HCT116 (cell line): ENCODE measurements at regions of chr11 and their contacts with region 1.

Region 1: GRCh38 chr11:34263440-34264172 is 94.2 kb downstream of the ABTB2 start:
- DNase-seq: peak; percentile 99
- ATAC-seq: peak; percentile 96
- H3K4me3 ChIP-seq: peak overlapping the region in 1 of 2 experiments; percentile 41; a peak in 3 of 4 replicates
- H3K27ac ChIP-seq: peak overlapping the region; percentile 90
- H3K4me1 ChIP-seq: peaks cover 37 to 44% of the 10 kb centered on the region in 2 experiments
- H3K27me3 ChIP-seq: no peaks in the 10 kb centered on the region
- CTCF ChIP-seq: no peak
- POLR2A ChIP-seq: no peak
- RAD21 ChIP-seq: peak; percentile 63

Region 2: DNA sequence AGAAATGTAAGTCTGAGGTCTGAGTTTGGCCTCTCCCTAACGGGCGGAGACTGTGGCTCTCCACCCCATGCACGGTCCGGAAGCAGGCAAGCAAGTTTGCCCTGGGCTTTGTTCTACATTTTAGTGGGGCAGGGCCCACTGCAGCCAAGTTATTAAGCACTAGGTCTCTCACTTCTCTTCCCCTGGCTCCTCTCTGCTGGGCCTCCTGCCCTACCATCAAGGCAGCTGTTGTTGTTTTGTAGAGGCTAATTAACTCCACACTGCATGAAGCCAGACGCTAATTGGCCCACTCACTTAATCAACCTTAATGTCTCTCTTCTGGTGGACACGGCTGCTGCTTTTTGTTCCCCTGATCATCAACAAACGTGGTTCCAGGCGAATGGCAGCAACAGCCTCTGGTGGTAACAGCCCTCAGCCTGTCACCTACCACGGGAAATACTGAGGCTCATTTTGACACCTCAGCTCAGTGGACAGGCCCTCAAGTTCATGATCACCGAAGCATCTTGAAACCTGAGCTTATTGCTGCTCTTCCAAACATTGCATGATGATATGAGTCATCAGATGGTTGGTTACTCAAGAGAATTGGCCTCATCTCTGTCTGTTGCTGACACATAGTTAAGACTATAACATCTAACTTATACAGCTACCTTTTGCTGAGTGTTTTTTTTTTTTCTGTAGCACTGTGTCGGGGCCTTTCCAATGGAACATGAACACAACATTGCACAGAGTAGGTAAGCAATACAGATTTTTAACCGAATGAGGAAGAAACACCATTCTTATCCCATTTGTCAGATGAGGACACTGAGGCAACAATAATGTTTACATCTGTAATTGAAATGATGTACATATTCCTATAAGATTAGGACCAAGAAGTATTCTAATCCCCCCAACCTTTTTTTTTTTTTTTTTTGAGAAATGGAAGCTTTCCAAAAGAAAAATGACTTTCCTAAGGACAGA is 350.9 kb before region 1 on chr11:
- CTCF ChIA-PET with region 1: no interaction called
- POLR2A ChIA-PET with region 1: no interaction called
- RAD21 ChIA-PET with region 1: no interaction called
- intact Hi-C with region 1: no loop called
- DNase-seq: peak; percentile 10
- ATAC-seq: peak; percentile 52
- H3K4me3 ChIP-seq: no peak overlapping the region
- H3K27ac ChIP-seq: no peak overlapping the region
- H3K4me1 ChIP-seq: peaks cover 5 to 10% of the 10 kb centered on the region in 2 experiments; a peak in 3 of 4 replicates
- H3K27me3 ChIP-seq: no peaks in the 10 kb centered on the region
- CTCF ChIP-seq: no peak
- POLR2A ChIP-seq: no peak
- RAD21 ChIP-seq: no peak

Region 3: DNA sequence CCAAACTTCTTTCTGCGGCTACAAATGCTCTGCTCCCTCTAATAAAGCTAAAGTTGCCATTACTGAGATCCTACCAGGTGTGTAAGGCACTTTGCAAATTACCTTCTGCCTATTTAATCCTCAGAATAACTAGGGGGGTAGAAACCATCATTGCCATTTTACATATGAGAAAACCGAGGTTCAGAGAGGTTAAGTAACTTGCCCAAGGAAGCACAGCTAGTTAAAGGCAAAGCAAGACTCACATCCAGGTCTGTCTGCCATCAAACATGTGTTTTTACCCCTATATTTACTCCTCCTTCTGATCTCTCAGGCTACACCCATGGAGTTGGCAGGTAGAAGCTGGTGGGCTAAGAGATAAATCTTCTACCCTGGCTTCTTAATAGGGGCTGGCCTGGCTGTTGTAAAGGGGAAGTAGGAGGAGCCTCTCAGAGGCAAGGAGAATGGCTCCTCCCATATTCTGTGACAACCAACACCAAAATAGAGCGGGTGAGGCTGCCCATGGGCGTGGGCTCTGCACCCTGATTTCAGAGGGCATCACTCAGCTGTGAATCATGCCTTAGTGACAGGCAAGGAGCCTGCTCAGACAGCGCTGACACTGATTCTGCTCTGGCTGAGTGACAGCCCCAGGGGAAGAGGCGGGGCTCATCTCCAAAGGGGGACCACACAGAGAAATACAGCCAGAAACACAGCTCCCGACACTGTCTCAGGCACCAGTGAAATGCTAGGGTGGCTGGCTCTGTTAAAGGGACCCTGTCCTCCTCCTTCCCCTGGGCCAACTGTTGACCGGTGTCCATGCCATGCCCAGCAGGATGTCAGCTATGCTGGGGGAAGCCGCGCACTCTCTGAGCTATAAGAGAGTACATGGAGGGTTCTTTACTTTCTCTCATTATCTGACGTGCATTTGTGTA is 12.6 kb before region 1 on chr11:
- CTCF ChIA-PET with region 1: interaction called, 3 read pairs
- POLR2A ChIA-PET with region 1: interaction called, 15 read pairs
- RAD21 ChIA-PET with region 1: interaction called in 1 of 2 experiments, 4 read pairs
- intact Hi-C with region 1: no loop called
- DNase-seq: peak; percentile 75
- ATAC-seq: peak; percentile 92
- H3K4me3 ChIP-seq: no peak overlapping the region
- H3K27ac ChIP-seq: no peak overlapping the region
- H3K4me1 ChIP-seq: peaks cover 24 to 51% of the 10 kb centered on the region in 2 experiments
- H3K27me3 ChIP-seq: no peaks in the 10 kb centered on the region
- CTCF ChIP-seq: no peak
- POLR2A ChIP-seq: no peak
- RAD21 ChIP-seq: no peak

Region 4: DNA sequence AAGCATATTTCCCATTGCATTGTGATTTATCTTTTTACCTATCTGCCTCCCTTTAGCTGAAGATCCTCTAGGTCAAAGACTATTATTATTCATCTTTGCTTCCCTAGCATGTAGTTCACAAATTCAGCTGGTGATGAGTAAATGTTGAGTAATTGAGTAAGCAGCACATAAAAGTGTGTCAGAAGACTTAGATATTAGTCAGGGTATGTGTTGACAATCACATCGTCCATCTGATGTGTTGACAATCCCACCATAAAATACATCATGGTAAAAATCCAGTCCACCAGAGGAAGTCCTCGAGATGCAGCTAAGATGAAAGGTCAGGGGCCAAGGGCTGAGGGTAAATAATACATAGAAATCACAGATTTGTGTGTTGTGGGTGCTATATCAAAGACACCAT is 117.1 kb after region 1 on chr11:
- CTCF ChIA-PET with region 1: no interaction called
- POLR2A ChIA-PET with region 1: no interaction called
- RAD21 ChIA-PET with region 1: no interaction called
- intact Hi-C with region 1: no loop called
- DNase-seq: peak; percentile 39
- ATAC-seq: peak; percentile 42; the same call in 1 of the 2 replicates
- H3K4me3 ChIP-seq: no peak overlapping the region
- H3K27ac ChIP-seq: no peak overlapping the region
- H3K4me1 ChIP-seq: peaks cover 0 to 7% of the 10 kb centered on the region in 2 experiments; a peak in 2 of 4 replicates
- H3K27me3 ChIP-seq: no peaks in the 10 kb centered on the region
- CTCF ChIP-seq: no peak
- POLR2A ChIP-seq: no peak
- RAD21 ChIP-seq: no peak

Region 5: DNA sequence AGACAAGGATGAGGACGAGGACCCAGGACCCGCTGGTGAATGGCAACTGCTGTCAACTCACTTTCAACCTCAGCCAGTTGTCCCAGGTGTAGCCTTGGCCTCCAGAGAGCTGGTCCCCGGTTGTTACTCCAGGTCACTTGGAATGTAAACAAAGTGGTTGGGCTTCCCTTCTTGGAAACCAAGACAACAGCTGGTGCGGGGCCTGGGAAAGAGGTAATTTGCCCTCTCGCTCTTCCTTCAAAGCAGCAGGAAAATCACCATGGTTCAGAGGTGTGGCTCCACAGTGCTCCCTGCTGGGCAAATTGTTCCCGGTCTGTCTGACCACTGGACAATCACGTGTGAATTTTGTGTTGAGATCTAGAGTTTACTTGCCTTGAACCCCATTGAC is 1140.8 kb after region 1 on chr11:
- CTCF ChIA-PET with region 1: no interaction called
- POLR2A ChIA-PET with region 1: no interaction called
- RAD21 ChIA-PET with region 1: no interaction called
- intact Hi-C with region 1: no loop called
- DNase-seq: no peak
- ATAC-seq: peak; percentile 94
- H3K4me3 ChIP-seq: 0 out of 4 replicates have a peak overlapping the region, but pooled peaks of 1 of the 2 experiments have one; percentile 2
- H3K27ac ChIP-seq: no peak overlapping the region
- H3K4me1 ChIP-seq: peaks cover 0 to 7% of the 10 kb centered on the region in 2 experiments; a peak in 2 of 4 replicates
- H3K27me3 ChIP-seq: no peaks in the 10 kb centered on the region
- CTCF ChIP-seq: peak; percentile 50 to 81 (median 73); a peak in 5 of 6 replicates
- POLR2A ChIP-seq: no peak
- RAD21 ChIP-seq: peak; percentile 71